Activated naive CD4-positive, alpha-beta T cell treated with anti-CD3 and anti-CD28 coated beads for 36 hours (primary cell): ENCODE measurements at regions of chr2 and their contacts with region 1.

Region 1: GRCh38 chr2:140621583-140622362 is 1509.0 kb downstream of the LRP1B start:
- DNase-seq: no peak
- H3K4me3 Mint-ChIP-seq: no peak overlapping the region
- H3K27ac Mint-ChIP-seq: no peak overlapping the region
- H3K4me1 Mint-ChIP-seq: no peaks in the 10 kb centered on the region
- H3K27me3 Mint-ChIP-seq: no peaks in the 10 kb centered on the region

Region 2: DNA sequence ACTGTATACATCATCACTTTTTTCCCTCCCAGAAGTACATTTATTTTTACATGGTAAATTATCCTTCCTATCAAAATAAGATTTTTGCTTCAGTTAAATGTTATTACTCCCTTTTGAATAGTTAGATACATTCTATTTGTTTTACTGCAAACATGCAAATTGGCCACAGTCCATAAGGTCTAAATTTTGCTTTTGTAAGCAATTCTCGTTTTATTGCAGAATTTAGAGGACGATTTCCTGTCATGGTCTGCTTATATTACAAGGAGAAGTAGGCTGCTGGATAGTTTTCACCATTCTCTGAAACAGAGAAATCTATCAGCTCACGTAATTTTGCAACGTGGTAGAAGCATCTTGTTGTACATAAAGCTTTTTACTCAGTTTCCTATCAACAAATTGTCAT is 123.4 kb before region 1 on chr2:
- CTCF ChIA-PET with region 1: no interaction called
- intact Hi-C with region 1: no loop called
- DNase-seq: no peak
- H3K4me3 Mint-ChIP-seq: no peak overlapping the region
- H3K27ac Mint-ChIP-seq: no peak overlapping the region
- H3K4me1 Mint-ChIP-seq: no peaks in the 10 kb centered on the region
- H3K27me3 Mint-ChIP-seq: no peaks in the 10 kb centered on the region

Region 3: GRCh38 chr2:140695163-140695562 is 73.4 kb after region 1 on chr2:
- CTCF ChIA-PET with region 1: no interaction called
- intact Hi-C with region 1: loop called (anchors 2 kb)
- DNase-seq: no peak
- H3K4me3 Mint-ChIP-seq: no peak overlapping the region
- H3K27ac Mint-ChIP-seq: no peak overlapping the region
- H3K4me1 Mint-ChIP-seq: no peaks in the 10 kb centered on the region
- H3K27me3 Mint-ChIP-seq: no peaks in the 10 kb centered on the region

Region 4: DNA sequence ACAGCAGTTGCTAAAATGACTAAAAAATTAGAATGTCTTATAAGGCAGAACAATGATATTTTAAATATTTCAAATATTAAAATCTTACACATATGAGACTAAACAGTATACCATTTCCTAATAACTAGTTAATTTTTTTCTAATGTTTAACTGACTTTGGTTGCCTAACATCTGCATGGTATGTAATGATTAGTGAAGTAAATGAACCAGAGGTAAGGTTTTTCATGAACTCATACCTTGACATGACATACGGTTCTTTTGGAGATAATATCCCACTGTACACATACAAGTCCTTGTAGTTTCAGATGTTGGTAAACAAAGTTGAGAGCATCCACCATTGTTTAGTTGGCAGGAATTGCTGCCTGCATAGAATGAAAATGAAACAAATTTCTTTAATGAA is 148.9 kb after region 1 on chr2:
- CTCF ChIA-PET with region 1: no interaction called
- intact Hi-C with region 1: no loop called
- DNase-seq: no peak
- H3K4me3 Mint-ChIP-seq: no peak overlapping the region
- H3K27ac Mint-ChIP-seq: no peak overlapping the region
- H3K4me1 Mint-ChIP-seq: no peaks in the 10 kb centered on the region
- H3K27me3 Mint-ChIP-seq: no peaks in the 10 kb centered on the region

Region 5: GRCh38 chr2:140905083-140905781 is 283.5 kb after region 1 on chr2:
- CTCF ChIA-PET with region 1: no interaction called
- intact Hi-C with region 1: no loop called
- DNase-seq: no peak
- H3K4me3 Mint-ChIP-seq: no peak overlapping the region
- H3K27ac Mint-ChIP-seq: no peak overlapping the region
- H3K4me1 Mint-ChIP-seq: no peaks in the 10 kb centered on the region
- H3K27me3 Mint-ChIP-seq: no peaks in the 10 kb centered on the region